ENCODE measurements at regions of chr6 and their contacts with region 1.

Region 1: DNA sequence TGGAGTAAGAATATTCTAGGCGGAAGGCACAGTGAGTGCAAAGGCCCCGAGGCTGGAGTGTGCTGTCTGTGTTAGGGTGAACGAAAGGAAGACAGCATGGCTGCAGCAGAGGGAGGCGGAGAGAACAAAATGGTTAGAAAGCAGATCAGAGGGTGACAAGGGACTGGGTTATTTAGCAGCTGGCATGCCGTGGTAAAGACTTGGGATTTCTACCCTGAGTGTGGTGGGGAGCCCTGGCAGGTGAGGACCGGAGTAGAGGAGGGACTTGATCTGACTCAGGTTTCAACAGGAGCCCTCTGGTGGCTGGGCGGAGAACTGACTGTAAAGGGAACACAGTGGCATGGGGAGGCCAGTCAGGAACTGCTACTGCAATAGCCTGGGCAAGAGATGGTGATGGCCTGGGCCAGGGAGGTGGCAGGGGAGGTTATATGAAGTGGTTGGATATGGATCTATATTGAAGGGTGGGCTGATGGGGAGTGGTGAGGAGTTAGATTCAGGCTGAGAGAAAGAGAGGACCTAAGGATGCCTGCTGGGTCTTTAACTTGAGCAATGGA is 38.0 kb downstream of the PIM1 start:
- DNase-seq: peak; percentile 87 to 92 (median 90)
- H3K4me3 ChIP-seq: no peak overlapping the region
- H3K27ac ChIP-seq: no peak overlapping the region
- H3K4me1 ChIP-seq: peaks cover 10 to 61% (median 53%) of the 10 kb centered on the region in 4 experiments
- H3K27me3 ChIP-seq: no peaks in the 10 kb centered on the region

Region 2: DNA sequence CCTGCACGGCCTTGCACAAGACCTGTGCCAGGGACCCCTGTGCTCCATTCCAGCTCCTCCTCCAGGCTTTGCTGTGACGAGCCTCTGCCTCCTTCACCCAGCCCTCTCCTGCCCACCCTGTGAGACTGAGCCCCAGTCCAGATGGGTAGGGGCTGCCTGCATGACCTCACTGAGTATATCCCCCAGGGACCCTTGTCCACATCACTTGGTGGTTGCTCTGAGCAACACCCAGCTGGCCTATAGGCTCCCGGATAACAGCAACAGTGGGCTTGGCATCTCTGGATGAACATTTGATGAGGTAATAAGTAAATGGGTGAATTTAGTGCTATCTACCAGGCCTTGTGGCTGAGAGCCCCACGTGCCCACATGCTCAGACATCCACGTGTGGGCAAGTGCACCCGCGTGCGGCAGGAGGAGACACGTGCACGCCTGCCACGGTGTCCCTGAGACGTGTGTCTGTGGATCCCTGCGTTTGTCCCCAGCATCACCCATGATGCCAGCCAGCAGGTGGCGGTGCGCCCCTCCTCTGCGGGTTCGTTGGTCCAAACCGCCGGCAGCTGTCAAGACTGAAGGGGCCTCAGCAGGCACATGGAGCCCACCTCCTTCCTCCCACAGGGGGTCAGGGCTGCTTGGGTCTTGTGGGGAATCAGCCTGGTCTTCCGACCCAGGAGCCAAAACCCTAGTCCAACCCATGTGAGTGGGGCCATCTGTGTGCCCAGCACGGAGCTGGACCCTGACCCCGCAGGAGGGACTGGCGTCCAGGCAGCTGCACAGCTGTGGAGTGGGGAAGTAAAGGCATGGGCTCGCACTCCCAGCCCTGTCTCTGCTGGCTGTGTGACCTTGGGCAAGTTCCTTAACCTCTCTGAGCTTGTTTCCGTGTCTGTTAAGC is 156.6 kb before region 1 on chr6:
- CTCF ChIA-PET with region 1: interaction called, 85 read pairs
- POLR2A ChIA-PET with region 1: interaction called, 3 read pairs
- DNase-seq: peak; percentile 89 to 94 (median 94)
- H3K4me3 ChIP-seq: peak overlapping the region in 3 of 7 experiments; percentile 7 to 58 (median 29)
- H3K27ac ChIP-seq: peak overlapping the region in 1 of 2 experiments; percentile 86
- H3K4me1 ChIP-seq: peaks cover 14 to 77% (median 53%) of the 10 kb centered on the region in 4 experiments
- H3K27me3 ChIP-seq: no peaks in the 10 kb centered on the region

Region 3: DNA sequence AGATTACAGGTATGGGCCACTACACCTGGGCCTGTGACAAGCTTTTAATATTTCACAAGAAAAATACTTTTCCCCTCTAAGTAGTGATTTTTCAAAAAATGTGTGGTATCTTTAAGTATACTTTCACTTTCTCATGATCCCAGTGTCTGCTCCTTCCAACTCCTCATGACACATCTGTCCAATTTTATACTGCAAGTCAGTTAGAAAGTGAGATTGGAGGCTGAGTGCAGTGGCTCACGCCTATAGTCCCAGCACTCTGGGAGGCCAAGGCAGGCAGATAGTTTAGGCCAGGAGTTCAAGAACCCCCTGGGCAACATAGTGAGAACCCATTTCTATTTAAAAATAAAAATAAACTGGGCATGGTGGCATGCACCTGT is 17.8 kb before region 1 on chr6:
- CTCF ChIA-PET with region 1: interaction called, 423 read pairs
- POLR2A ChIA-PET with region 1: interaction called, 5 read pairs
- DNase-seq: peak in 2 of 3 donors; percentile 73 to 81
- H3K4me3 ChIP-seq: peak overlapping the region in 1 of 7 experiments; percentile 15
- H3K27ac ChIP-seq: peak overlapping the region; percentile 25 to 85
- H3K4me1 ChIP-seq: peaks cover 16 to 85% (median 60%) of the 10 kb centered on the region in 4 experiments
- H3K27me3 ChIP-seq: no peaks in the 10 kb centered on the region

Region 4: GRCh38 chr6:37406726-37407356 is 198.9 kb after region 1 on chr6:
- CTCF ChIA-PET with region 1: no interaction called
- POLR2A ChIA-PET with region 1: no interaction called
- DNase-seq: no peak
- H3K4me3 ChIP-seq: no peak overlapping the region
- H3K27ac ChIP-seq: no peak overlapping the region
- H3K4me1 ChIP-seq: no peaks in the 10 kb centered on the region
- H3K27me3 ChIP-seq: peaks cover 0 to 2% (median 0%) of the 10 kb centered on the region in 5 experiments